ENCODE measurements at regions of chr17 and their contacts with region 1.

Region 1: DNA sequence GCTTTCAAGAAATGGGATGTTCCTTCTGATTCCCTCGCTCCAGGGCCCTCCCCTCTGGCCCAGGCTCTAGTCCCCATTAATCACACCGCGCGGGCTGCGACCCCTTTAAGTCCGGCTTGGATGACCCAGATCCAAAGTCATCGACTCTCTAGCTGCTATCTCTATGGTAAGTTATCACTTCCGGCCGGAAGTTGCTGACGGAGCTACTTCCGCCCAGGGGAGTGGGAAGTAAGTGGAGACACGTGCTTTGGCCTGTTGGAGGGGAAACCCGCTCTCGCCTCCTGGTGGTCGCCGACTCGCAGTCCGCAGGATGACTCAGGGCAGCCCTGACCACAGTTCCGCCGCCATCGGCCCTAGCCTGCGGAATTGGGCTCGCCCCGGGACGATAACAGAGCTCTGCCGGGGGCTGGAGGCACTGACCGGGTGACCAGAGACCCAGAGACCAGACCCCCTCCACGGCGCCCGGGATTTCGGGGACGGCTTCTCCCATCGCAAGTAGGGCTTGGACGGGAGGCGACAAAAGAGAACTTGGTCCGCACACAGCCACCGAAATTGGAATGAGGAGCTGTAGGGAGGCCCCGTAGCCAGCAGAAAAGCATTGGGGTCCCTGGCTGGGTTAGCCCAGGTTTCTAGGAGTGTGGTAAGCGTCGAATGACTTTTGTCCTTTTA is 52.2 kb upstream of the SEC14L1 start:
- DNase-seq: peak; percentile 98
- ATAC-seq: peak; percentile 87
- H3K4me3 ChIP-seq: peak overlapping the region; percentile 74
- H3K27ac ChIP-seq: peak overlapping the region; percentile 73
- H3K4me1 ChIP-seq: peaks cover 25% of the 10 kb centered on the region
- H3K27me3 ChIP-seq: no peaks in the 10 kb centered on the region
- CTCF ChIP-seq: peak; percentile 71

Region 2: DNA sequence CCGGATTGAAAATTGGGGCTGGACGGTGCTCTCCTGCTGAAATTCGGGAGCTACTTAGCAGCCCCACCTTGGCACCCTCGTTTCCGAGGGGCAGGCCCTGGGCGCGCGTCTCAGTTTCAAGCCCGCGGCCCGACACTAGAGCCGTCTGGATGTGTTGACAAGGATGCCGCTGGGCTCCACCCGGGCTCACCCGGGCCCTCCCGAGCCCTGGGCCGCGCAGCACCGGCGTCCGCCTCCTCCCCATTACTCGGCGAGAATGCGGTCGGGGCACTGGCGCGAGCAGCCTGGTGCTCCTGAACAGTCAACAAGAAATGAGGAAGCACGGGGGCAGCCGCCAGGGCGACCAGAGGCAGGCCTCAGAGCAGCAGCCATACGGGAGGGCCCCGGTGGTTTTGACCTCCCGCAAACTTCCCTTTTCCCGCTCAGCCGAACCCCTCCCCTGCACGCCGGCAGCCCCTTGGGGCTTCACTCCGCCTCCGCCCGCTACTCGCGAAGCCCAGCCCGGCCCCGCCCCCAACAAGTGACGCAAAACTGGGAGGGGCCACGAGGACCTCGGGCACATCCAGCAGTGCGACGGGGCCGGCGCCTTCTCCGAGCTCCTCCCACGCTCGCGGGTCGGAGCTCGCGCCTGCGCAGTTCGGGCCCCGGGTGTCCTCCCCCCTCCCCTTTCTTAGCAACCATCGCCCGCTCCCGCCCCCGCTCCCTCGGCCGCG is 51.7 kb after region 1 on chr17:
- CTCF ChIA-PET with region 1: interaction called, 5 read pairs
- POLR2A ChIA-PET with region 1: no interaction called
- intact Hi-C with region 1: loop called (anchors 2 kb)
- DNase-seq: peak; percentile 99
- ATAC-seq: peak; percentile 83
- H3K4me3 ChIP-seq: peak overlapping the region; percentile 61
- H3K27ac ChIP-seq: peak overlapping the region; percentile 90
- H3K4me1 ChIP-seq: peaks cover 48% of the 10 kb centered on the region
- H3K27me3 ChIP-seq: no peaks in the 10 kb centered on the region
- CTCF ChIP-seq: no peak

Region 3: GRCh38 chr17:77208217-77208808 is 119.7 kb after region 1 on chr17:
- CTCF ChIA-PET with region 1: interaction called, 3 read pairs
- POLR2A ChIA-PET with region 1: no interaction called
- intact Hi-C with region 1: loop called (anchors 5 kb)
- DNase-seq: no peak
- ATAC-seq: peak; percentile 74
- H3K4me3 ChIP-seq: no peak overlapping the region
- H3K27ac ChIP-seq: no peak overlapping the region
- H3K4me1 ChIP-seq: no peaks in the 10 kb centered on the region
- H3K27me3 ChIP-seq: no peaks in the 10 kb centered on the region
- CTCF ChIP-seq: no peak; the same call in 1 of the 2 replicates

Region 4: DNA sequence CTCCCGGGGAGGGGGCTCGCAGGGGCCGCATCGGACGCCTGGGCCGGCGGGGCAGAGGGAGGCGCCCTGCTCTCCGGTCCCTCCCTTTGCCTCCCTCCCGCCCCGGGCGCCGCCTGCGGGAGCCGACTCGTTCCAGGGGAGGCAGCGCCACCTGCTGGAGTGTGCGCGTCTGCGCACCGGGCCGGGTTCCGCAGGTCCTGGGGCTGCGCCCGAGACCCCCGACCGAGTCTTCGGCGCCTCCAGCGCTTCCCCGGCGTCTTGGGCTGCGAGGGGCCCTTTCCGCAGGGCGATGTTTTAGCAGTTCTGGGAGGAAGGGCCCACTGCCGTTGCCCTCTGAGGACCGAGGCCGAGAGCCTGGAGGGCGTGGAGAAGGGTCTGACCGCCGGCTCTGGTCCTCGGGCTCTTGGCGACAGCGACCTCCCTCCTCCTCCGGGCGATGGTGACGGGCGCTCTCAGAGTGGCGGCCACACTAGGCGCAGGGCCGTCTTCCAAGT is 158.5 kb after region 1 on chr17:
- CTCF ChIA-PET with region 1: interaction called, 3 read pairs
- POLR2A ChIA-PET with region 1: no interaction called
- intact Hi-C with region 1: loop called (anchors 1 kb)
- DNase-seq: peak; percentile 89
- ATAC-seq: peak; percentile 92
- H3K4me3 ChIP-seq: peak overlapping the region; percentile 74
- H3K27ac ChIP-seq: no peak overlapping the region
- H3K4me1 ChIP-seq: peaks cover 3% of the 10 kb centered on the region; the same call in 1 of the 2 replicates
- H3K27me3 ChIP-seq: no peaks in the 10 kb centered on the region
- CTCF ChIP-seq: peak; percentile 97

Region 5: GRCh38 chr17:77254951-77255825 is 166.6 kb after region 1 on chr17:
- CTCF ChIA-PET with region 1: interaction called, 14 read pairs
- POLR2A ChIA-PET with region 1: no interaction called
- intact Hi-C with region 1: loop called (anchors 2 kb)
- DNase-seq: peak; percentile 99
- ATAC-seq: peak; percentile 81
- H3K4me3 ChIP-seq: peak overlapping the region; percentile 0; the same call in 1 of the 2 replicates
- H3K27ac ChIP-seq: peak overlapping the region; percentile 90
- H3K4me1 ChIP-seq: peaks cover 35% of the 10 kb centered on the region
- H3K27me3 ChIP-seq: no peaks in the 10 kb centered on the region
- CTCF ChIP-seq: no peak

Measured in PC-3 (cell line).